ENCODE measurements at regions of chr1 and their contacts with region 1.

Region 1: DNA sequence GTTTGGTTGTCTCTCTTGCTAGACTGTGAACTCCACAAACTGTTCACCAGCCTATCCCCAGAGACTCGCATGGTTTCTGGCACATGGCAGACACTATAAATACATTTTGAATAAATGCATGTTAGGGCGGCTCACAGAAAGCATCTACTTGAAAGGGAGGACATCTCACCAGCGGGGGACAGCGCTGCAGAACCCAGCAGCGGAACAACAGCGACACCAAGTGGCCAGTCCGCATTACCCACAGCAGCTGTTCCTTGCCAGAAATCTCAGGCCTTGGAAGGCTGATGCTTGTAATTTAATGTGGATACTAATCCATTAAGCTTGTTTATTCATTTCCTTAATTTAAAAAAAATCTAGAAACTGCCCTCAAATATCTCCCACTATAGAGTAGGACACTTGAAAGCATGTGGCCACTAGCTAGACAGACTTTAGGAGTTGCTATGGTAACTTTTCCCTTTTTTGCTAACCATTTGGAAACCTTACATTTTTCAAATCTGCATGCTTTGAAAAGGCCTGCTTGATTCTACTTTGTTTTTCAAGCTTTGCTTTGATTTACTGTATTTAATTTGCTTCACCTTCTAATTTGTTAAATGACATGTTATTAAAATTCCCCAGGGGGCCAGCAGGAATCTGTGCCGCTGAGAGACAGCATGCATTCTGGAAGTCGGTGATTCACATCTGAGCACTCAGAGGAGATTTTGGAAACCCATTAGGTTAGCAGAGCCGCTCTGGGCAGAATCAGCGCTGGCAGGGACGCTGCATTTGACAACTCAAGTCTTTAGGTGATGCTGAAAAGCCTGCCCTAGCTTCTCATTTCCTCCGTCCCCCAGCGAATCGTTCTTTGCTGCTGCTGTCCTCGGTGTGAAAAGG is 63.5 kb upstream of the SSX2IP start:
- DNase-seq: peak; percentile 85
- H3K4me3 ChIP-seq: no peak overlapping the region
- H3K27ac ChIP-seq: no peak overlapping the region
- H3K4me1 ChIP-seq: peaks cover 0 to 12% (median 1%) of the 10 kb centered on the region in 4 donors
- H3K27me3 ChIP-seq: no peaks in the 10 kb centered on the region
- CTCF ChIP-seq: peak; percentile 85 to 92 (median 91)
- EP300 ChIP-seq: no peak
- POLR2A ChIP-seq: no peak

Region 2: GRCh38 chr1:84478876-84479868 is 274.6 kb before region 1 on chr1 and contains the start of gene RPF1:
- intact Hi-C with region 1: loop called (anchors 10 kb)
- DNase-seq: peak; percentile 79
- H3K4me3 ChIP-seq: peak within 1 kb of the TSS; percentile 68 to 81 (median 74)
- H3K27ac ChIP-seq: peak within 1 kb of the TSS; percentile 84 to 92 (median 88)
- H3K4me1 ChIP-seq: peaks cover 0 to 31% (median 20%) of the 10 kb centered on the region in 4 donors
- H3K27me3 ChIP-seq: peaks cover 0 to 22% (median 7%) of the 10 kb centered on the region in 3 donors
- CTCF ChIP-seq: no peak
- EP300 ChIP-seq: no peak
- POLR2A ChIP-seq: peak; percentile 61 to 63
- total RNA-seq, gene RPF1: 30.7 to 66.5 (median 41.8) TPM

Region 3: GRCh38 chr1:84620720-84621313 is 132.9 kb before region 1 on chr1:
- intact Hi-C with region 1: loop called (anchors 5 kb)
- DNase-seq: peak; percentile 88
- H3K4me3 ChIP-seq: peak overlapping the region; percentile 42 to 64 (median 58)
- H3K27ac ChIP-seq: peak overlapping the region; percentile 68 to 80 (median 76)
- H3K4me1 ChIP-seq: peaks cover 0 to 46% (median 22%) of the 10 kb centered on the region in 4 donors
- H3K27me3 ChIP-seq: no peaks in the 10 kb centered on the region
- CTCF ChIP-seq: peak; percentile 74 to 99 (median 79)
- EP300 ChIP-seq: no peak
- POLR2A ChIP-seq: no peak

Region 4: GRCh38 chr1:84668185-84668584 is 85.6 kb before region 1 on chr1:
- intact Hi-C with region 1: loop called (anchors 5 kb)
- DNase-seq: no peak
- H3K4me3 ChIP-seq: no peak overlapping the region
- H3K27ac ChIP-seq: no peak overlapping the region
- H3K4me1 ChIP-seq: no peaks in the 10 kb centered on the region
- H3K27me3 ChIP-seq: no peaks in the 10 kb centered on the region
- CTCF ChIP-seq: peak in 1 of 4 experiments; percentile 33
- EP300 ChIP-seq: no peak
- POLR2A ChIP-seq: no peak